MCF 10A (cell line): ENCODE measurements at regions of chr19 and their contacts with region 1.

Region 1: DNA sequence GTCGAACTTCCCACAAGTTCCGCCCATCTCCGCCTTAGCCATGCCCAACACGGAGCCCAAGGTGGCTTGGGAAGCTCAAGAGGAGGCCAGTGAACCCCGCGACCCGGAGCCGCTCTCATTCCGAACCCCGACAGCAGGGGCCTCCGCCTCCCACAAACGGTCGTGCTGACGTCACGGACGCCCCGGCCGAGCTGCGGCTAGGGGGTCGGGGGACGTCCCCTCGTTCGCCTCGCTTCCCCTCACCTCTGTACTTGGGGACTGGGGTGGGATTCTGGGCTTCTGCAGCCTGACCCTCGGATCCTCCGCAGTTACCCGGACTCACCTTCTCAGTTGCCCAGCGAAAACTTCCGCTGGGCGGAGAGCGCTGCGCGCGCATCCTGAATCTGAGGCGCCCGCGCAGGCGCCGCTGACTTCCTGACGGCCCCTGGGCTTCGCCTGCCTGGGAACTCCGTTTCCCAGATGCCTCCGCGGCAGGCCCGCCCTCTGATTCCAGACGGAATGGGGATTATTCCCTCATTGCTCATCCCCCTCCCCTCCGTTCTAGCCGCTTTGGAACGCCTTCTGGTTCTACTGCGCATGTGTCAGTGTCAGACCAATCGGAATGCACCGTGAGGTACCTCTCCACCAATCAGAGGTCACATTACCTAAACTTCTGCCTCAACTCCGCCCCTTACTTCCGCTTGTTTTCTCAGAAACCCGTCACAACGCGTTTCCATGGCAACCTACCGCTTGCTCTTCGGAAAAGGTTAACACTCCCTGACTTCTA is at the start of gene VRK3:
- DNase-seq: peak; percentile 100
- H3K4me3 Mint-ChIP-seq: peak within 1 kb of the TSS; percentile 94
- H3K27ac Mint-ChIP-seq: peak within 1 kb of the TSS; percentile 100
- H3K4me1 Mint-ChIP-seq: peaks cover 11% of the 10 kb centered on the region
- H3K27me3 Mint-ChIP-seq: no peaks in the 10 kb centered on the region
- CTCF ChIP-seq: peak; percentile 15
- total RNA-seq, gene VRK3: 24.7 and 32.8 TPM in 2 replicates

Region 2: GRCh38 chr19:49929611-49930482 is 95.4 kb before region 1 on chr19:
- CTCF ChIA-PET with region 1: no interaction called
- POLR2A ChIA-PET with region 1: interaction called, 19 read pairs
- intact Hi-C with region 1: no loop called
- DNase-seq: peak; percentile 98
- H3K4me3 Mint-ChIP-seq: peak overlapping the region; percentile 85
- H3K27ac Mint-ChIP-seq: peak overlapping the region; percentile 90
- H3K4me1 Mint-ChIP-seq: peaks cover 16% of the 10 kb centered on the region
- H3K27me3 Mint-ChIP-seq: no peaks in the 10 kb centered on the region
- CTCF ChIP-seq: no peak

Region 3: DNA sequence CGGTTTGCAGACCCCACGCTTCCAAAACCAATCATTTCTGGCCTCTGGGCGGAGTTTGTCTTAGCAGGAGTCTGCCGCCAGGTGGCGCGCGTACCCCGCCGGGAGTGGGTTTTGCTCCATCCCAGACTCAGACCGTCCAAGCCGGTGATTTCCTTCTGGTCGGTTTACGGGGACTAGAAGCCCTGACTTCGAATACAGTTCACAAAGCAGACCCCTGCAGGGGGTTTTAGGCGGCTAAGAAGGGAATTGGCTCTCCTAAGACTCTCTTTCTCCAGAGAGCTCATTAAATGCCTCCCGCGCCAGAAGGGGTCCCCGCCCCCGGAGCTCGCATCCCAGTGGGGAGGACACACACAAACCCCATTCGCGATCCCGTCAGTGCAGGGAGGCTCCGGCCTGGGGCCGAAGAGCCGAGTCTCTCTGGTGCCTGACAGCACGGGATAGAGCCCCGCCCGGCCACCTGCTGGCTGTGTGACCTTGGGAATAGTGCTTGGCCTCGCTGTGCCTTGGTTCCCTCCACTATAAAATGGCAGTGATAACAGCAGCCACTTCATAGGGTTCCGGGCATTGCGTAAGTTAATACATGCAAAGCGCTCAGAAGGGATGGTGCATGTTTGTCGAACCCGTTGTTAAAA is 87.3 kb before region 1 on chr19:
- CTCF ChIA-PET with region 1: interaction called, 3 read pairs
- POLR2A ChIA-PET with region 1: no interaction called
- intact Hi-C with region 1: loop called (anchors 2 kb)
- DNase-seq: peak; percentile 78
- H3K4me3 Mint-ChIP-seq: no peak overlapping the region
- H3K27ac Mint-ChIP-seq: no peak overlapping the region
- H3K4me1 Mint-ChIP-seq: no peaks in the 10 kb centered on the region
- H3K27me3 Mint-ChIP-seq: peaks cover 7% of the 10 kb centered on the region
- CTCF ChIP-seq: peak; percentile 98

Region 4: DNA sequence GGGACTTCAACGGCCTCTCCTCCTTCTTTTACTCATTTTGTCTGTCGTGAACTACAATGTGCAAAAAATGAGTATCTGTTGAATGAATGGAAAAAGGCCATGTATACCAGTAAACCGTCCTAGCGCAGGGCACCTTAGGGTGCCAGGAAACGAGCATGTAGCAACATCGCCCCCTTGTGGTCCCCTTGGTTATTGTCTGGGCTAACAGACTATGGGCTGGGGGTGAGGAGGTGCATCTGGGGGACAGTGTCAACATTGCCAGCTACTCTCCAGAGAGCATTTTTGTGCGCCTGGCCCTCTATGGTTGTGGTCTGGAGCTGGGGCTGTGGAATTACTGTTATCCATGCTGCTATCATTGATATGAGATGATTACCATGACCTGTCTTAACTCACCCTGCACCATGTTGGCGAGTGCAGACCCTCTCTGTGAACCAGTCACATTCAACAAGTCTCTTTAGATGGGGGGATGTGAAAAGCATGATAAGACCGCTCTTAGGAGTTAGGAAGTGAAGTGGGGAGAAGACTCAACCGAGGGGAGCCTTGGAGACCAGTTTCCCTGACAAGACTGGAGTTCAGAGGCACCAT is 41.5 kb before region 1 on chr19:
- CTCF ChIA-PET with region 1: interaction called, 3 read pairs
- POLR2A ChIA-PET with region 1: interaction called, 5 read pairs
- intact Hi-C with region 1: loop called (anchors 1 kb)
- DNase-seq: peak; percentile 69
- H3K4me3 Mint-ChIP-seq: no peak overlapping the region
- H3K27ac Mint-ChIP-seq: no peak overlapping the region
- H3K4me1 Mint-ChIP-seq: no peaks in the 10 kb centered on the region
- H3K27me3 Mint-ChIP-seq: no peaks in the 10 kb centered on the region
- CTCF ChIP-seq: peak; percentile 85

Region 5: DNA sequence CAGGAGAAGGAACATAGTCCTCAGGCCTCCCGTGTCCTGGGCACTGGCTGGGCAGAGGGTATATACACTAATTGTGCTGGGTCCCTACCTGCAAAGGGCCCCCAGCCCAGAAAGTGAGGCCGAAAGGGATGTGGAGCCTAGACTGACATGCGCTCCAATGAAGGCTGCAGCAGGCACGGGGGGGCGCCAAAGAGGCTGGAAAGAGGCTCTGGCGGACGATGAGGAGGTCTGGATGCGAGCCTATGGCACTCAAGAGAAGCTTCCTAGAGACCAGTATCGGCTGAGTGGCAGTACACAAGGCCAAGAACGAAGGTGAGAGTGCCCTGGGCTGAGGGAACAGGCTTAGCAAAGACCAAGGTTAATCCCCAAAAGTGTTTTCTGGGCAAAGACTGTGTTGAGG is 16.7 kb before region 1 on chr19:
- CTCF ChIA-PET with region 1: interaction called, 3 read pairs
- POLR2A ChIA-PET with region 1: interaction called, 10 read pairs
- intact Hi-C with region 1: no loop called
- DNase-seq: no peak
- H3K4me3 Mint-ChIP-seq: no peak overlapping the region
- H3K27ac Mint-ChIP-seq: no peak overlapping the region
- H3K4me1 Mint-ChIP-seq: peaks cover 11% of the 10 kb centered on the region
- H3K27me3 Mint-ChIP-seq: no peaks in the 10 kb centered on the region
- CTCF ChIP-seq: no peak